Colonic mucosa (tissue), 4 donors: ENCODE measurements at regions of chr3 and their contacts with region 1.

Region 1: GRCh38 chr3:50192689-50193141 is 1.3 kb downstream of the GNAT1 start:
- DNase-seq: peak; percentile 78
- H3K4me3 ChIP-seq: no peak overlapping the region
- H3K27ac ChIP-seq: no peak overlapping the region
- H3K4me1 ChIP-seq: peaks cover 4% of the 10 kb centered on the region
- H3K27me3 ChIP-seq: peaks cover 17% of the 10 kb centered on the region
- CTCF ChIP-seq: peak; percentile 96

Region 2: DNA sequence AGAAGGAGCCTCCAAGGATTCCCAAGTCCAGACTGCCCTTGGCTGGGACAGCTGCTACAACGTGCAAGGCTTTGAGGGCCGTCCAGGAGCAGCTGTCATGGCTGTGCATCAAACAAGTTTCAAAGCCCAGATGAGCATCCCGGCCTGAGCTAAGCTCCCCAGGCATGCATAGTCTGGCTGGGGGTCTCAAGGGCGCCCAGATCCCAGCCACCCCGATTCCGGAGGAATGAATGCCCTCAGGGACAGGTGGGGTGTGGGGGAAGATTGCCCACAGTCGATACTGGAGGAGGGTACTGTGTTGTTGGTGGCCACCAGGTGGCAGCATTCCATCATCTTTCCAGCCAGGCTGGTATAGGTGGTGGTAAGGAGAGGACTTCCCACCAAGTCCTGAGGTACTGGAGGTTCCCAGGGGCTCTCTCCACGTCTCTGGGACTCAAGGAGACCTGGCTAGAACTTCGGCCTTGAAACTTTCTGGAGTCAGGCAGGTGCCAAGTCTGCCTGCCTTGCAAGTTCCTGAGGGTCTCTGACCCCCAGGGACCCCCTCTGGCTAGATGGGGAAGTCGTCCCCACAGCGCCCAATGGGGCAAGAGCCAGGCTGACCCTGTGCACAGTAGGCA is 71.2 kb before region 1 on chr3:
- intact Hi-C with region 1: loop called (anchors 2 kb)
- DNase-seq: peak; percentile 80
- H3K4me3 ChIP-seq: no peak overlapping the region
- H3K27ac ChIP-seq: no peak overlapping the region
- H3K4me1 ChIP-seq: no peaks in the 10 kb centered on the region
- H3K27me3 ChIP-seq: no peaks in the 10 kb centered on the region
- CTCF ChIP-seq: peak; percentile 68

Region 3: DNA sequence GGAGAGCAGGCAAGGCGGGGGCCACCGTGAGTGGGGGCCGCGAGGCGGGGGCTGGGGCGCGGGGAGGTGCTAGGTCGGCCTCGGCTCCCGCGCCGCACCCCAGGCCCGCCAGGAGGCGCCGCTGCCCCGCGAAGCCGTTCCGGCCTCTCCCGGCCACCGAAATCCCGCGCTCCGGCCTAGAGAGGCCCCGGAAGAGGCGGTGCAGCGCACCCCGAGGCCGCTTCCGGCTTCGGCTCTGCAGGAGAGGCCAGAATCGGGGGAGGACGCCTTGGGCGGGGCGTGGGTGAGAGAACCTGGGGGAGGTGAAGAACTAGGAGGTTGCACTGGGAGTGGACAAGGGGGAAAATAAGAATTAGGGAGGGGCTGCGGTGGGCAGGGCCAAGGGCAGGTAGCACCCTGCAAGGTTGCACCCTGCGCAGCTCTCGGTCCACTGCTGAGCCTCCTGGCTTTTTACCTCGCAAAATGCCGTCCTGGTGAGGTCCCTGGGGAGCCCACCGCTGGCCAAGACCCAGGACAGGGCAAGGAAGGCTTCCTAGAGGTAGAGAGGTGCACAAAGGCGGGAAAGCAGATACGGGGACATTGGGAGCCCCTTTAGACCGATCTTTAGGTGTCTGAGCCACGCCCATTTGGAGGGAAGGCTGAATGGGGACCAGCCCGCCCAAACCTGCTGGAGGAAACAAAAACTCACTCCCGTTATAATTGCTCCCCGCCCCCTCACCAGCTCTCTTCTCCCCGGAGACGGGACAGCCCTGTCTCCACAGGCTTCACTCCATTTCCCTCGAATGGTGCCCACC is 34.9 kb after region 1 on chr3:
- intact Hi-C with region 1: loop called (anchors 2 kb)
- DNase-seq: peak; percentile 95
- H3K4me3 ChIP-seq: peak overlapping the region; percentile 82
- H3K27ac ChIP-seq: peak overlapping the region; percentile 85
- H3K4me1 ChIP-seq: peaks cover 4% of the 10 kb centered on the region
- H3K27me3 ChIP-seq: no peaks in the 10 kb centered on the region
- CTCF ChIP-seq: peak; percentile 93